Activated CD8-positive, alpha-beta T cell treated with anti-CD3 and anti-CD28 coated beads, Interleukin-2, amount 10 ng/mL, durations not matched to agents 7 days and 5 days (primary cell): ENCODE measurements at regions of chr2 and their contacts with region 1.

Region 1: DNA sequence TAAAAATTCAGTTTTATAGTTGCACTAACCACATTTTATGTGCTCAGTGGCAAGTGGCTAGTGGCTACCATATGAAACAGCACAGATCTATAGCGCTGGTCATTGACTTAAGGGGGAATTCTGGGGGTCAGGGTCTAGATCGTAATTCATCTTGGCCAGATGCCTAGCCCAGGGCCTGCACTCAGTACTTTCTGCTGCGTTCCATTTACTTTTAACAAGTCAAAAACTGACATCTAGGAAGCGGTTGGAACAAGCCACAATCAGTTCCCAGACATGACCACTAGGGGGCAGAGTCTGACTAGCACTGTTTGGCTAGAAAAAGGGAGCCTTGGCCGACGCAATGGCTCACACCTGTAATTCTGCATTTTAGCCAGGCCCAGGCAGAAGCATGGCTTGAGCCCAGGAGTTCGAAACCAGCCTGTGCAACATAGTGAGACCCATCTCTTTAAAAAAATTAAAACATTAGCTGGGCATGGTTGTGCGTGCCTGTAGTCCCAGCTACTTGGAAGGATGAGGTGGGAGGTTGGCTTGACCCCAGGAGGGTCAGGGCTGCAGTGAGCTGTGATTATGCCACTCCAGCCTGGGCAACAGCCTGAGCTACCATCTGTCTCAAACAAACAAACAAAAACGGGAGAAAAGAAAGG is 9.0 kb upstream of the TMBIM1 start:
- DNase-seq: peak; percentile 95
- ATAC-seq: peak; percentile 88
- H3K4me3 Mint-ChIP-seq: no peak overlapping the region
- H3K27ac Mint-ChIP-seq: peak overlapping the region; percentile 46
- H3K4me1 Mint-ChIP-seq: peaks cover 7% of the 10 kb centered on the region
- H3K27me3 Mint-ChIP-seq: no peaks in the 10 kb centered on the region

Region 2: DNA sequence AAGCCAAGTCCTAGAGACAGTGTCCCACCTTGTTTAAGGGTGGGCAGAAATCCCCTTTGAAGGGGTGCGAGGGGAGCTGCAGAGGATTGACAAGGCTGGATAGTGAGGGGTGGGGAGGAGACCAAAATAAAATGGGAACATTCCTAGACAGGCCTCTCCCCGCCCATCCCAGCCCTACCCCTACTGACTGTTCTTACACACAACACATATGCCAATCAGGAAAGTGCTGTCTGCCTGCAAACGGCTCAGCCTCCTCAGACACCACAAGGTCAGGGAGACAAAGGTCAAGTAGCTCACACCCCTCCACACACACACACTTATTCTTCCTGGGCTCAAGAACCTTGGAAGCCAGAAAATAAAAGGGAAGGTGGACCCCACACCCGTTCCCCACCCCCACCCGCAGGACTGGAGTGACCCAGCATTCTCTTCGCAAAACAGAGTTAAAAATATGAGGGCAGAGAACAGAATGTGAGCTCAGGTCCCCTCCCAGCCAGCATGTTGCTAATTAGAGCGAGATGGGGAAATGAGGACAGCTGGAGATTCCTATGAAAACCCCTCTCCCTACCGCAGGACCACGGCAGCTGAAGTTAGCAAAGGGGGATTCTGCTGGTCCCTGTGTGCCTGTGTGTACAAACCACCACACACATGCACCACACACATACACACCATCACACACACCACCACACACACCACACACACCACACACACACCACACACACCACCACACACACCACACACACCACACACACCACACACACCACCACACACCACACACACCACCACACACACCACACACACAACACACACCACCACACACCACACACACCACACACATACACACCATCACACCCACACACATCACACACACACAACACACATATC is 496.3 kb before region 1 on chr2:
- CTCF ChIA-PET with region 1: no interaction called
- POLR2A ChIA-PET with region 1: no interaction called
- DNase-seq: no peak
- ATAC-seq: no peak
- H3K4me3 Mint-ChIP-seq: no peak overlapping the region
- H3K27ac Mint-ChIP-seq: peak overlapping the region; percentile 4
- H3K4me1 Mint-ChIP-seq: no peaks in the 10 kb centered on the region
- H3K27me3 Mint-ChIP-seq: no peaks in the 10 kb centered on the region

Region 3: GRCh38 chr2:218003981-218004419 is 297.3 kb before region 1 on chr2:
- CTCF ChIA-PET with region 1: no interaction called
- POLR2A ChIA-PET with region 1: no interaction called
- DNase-seq: no peak
- ATAC-seq: peak; percentile 34
- H3K4me3 Mint-ChIP-seq: no peak overlapping the region
- H3K27ac Mint-ChIP-seq: no peak overlapping the region
- H3K4me1 Mint-ChIP-seq: no peaks in the 10 kb centered on the region
- H3K27me3 Mint-ChIP-seq: peaks cover 13% of the 10 kb centered on the region

Region 4: DNA sequence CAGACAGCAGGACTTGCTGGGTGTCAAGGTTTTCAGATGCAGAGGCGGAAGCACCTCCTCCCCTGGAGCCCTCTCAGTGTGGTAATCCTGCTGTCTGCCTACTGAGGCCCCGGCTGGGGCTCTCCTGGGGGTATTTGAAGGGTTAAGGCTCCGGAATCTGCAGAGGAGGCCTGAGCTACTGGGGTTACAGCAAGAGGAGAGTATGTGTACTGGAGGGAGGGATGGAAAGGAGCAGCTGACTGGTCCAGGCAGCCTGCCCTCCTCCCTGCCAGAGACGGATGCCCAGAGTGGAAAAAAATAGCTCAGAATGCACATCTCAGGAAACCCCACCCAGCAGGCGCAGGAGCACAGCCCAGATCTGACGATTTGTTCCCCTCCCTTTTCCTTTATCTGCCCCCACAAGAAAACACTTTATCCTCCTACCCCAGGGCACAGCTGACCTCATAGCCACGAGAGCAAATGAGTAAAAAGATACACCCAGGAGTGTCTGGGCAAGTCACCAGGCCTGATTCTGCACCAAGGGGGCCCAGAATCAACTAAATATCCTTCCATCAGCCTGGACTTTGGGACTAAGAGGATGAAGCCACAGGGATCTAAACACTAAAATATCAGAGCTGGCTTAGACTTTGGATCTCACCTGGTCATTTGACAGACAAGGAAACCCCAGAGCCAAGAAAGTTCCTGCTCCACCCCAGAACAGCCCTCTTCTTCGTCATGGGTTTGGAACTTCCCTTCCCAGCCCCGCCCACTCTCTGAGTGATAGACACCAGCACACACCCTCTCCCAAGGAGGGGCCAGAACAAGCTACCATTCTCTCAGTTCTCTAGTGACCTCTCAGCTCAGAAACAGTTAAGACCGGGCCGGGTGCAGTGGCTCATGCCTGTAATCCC is 14.5 kb before region 1 on chr2:
- CTCF ChIA-PET with region 1: interaction called, 30 read pairs
- POLR2A ChIA-PET with region 1: interaction called, 5 read pairs
- DNase-seq: peak; percentile 90
- ATAC-seq: peak; percentile 77
- H3K4me3 Mint-ChIP-seq: peak overlapping the region; percentile 91
- H3K27ac Mint-ChIP-seq: peak overlapping the region; percentile 98
- H3K4me1 Mint-ChIP-seq: peaks cover 78% of the 10 kb centered on the region
- H3K27me3 Mint-ChIP-seq: no peaks in the 10 kb centered on the region

Region 5: DNA sequence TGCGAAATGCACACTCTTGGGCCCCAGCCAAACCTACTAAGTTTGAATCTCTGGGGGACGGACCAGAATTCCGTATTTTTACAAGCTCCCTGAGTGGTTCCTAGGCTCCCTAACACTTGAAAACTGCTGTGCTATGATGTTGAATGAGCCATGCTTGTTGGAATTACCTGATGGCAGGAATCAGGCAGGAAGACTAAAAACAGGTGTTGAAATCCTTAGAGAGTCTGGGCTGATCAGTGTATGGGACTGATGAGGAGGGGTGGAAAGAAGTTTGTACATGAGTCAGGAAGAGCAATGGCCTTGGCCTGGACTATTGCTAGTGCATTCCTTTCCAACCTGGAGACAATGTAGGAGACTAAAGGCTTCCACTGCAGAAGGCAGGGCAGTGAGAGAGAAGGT is 15.9 kb after region 1 on chr2:
- CTCF ChIA-PET with region 1: interaction called, 10 read pairs
- POLR2A ChIA-PET with region 1: interaction called, 3 read pairs
- DNase-seq: no peak
- ATAC-seq: no peak
- H3K4me3 Mint-ChIP-seq: peak overlapping the region; percentile 62
- H3K27ac Mint-ChIP-seq: peak overlapping the region; percentile 91
- H3K4me1 Mint-ChIP-seq: peaks cover 31% of the 10 kb centered on the region
- H3K27me3 Mint-ChIP-seq: no peaks in the 10 kb centered on the region

Region 6: GRCh38 chr2:218345491-218346216 is 44.4 kb after region 1 on chr2:
- CTCF ChIA-PET with region 1: interaction called, 10 read pairs
- POLR2A ChIA-PET with region 1: no interaction called
- DNase-seq: no peak
- ATAC-seq: no peak
- H3K4me3 Mint-ChIP-seq: no peak overlapping the region
- H3K27ac Mint-ChIP-seq: no peak overlapping the region
- H3K4me1 Mint-ChIP-seq: no peaks in the 10 kb centered on the region
- H3K27me3 Mint-ChIP-seq: no peaks in the 10 kb centered on the region

Region 7: DNA sequence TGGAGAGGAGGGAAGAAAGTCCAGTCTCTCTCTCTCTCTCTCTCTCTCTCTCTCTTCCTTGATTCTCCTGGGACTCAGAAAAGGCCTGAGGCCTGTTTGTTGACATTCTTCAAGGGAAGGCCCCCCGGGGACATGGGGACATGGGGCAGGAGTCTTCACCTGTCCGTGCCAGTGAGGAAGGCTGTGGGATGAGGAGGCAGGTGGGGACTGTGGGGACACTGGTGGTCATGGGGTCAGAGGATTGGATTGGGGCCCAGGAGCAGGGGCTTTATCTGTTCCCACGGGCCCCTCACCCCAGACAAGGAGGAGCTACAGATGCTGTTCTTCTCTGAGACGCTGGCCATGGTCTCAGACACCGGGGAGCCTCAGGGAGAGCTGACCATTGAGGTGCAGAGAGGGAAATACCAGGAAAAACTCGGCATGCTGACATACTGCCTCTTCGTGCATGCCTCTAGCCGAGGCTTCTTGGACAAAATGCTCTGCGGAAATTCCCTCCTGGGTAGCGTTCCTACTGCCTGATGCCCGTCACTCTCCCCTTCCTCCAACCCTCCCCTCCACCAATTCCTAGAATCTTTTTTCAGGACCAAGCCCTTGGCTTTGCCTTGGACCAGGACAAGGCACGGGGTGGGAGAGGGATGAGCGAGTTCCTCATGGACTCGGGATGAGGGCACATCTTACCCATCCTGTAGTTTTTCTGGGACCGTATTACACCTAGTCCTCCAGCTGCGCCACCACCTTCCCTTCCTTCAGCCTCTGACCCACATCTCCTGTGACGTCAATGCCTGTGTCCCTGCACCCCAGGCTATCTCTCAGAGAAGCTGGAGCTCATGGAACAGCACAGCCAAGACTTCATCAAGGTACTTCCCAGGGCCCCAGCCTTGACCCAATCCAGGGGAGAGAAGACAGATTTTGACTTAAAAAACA is 56.2 kb after region 1 on chr2:
- CTCF ChIA-PET with region 1: interaction called, 62 read pairs
- POLR2A ChIA-PET with region 1: no interaction called
- DNase-seq: no peak
- ATAC-seq: no peak
- H3K4me3 Mint-ChIP-seq: no peak overlapping the region
- H3K27ac Mint-ChIP-seq: peak overlapping the region; percentile 66
- H3K4me1 Mint-ChIP-seq: peaks cover 2% of the 10 kb centered on the region
- H3K27me3 Mint-ChIP-seq: peaks cover 6% of the 10 kb centered on the region

Region 8: DNA sequence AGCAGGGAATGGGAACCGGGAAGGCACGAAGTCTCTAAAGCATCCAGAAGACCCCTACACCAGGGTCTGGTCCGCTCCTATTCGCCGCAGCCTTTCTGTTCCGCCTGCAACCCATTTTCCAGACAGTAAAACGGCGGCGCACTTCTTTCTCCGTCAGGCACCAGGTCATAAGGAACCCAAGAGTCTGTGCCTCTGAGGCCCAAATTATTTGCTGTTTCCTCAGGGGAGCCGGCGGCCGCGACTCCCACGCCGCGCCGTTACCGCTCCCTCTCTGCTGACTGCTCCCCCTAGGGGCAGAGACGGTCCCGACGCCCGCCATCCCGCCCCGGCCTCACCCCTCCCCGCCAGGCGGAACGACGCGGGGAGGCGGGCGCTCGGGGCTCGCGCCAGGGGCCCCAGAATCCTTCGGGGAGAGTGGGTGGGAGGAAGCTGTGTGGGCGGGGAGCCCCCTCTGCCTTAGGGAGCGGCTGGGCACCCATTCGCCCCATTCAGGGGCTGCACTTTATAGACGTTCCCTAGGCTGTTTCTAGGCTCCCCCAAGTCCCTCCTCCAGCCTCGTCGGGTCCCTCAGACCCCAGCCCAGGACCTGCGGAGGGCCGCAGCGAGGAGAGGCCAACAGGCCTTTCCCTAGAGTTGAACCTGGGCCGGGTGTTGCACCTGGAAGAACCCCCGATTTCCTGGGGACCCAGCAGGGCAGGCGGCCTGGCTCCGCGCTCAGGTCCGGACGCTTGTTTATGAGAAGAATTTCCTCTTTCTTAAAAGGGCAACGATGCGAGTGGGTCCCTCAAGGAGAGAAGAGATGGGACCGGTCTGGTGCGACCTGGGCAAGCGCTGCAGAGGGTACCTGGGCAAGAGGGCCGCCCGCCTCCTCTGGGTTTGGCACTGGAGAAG is 94.7 kb after region 1 on chr2:
- CTCF ChIA-PET with region 1: interaction called, 21 read pairs
- POLR2A ChIA-PET with region 1: interaction called, 7 read pairs
- DNase-seq: peak; percentile 96
- ATAC-seq: peak; percentile 66
- H3K4me3 Mint-ChIP-seq: peak overlapping the region; percentile 85
- H3K27ac Mint-ChIP-seq: peak overlapping the region; percentile 96
- H3K4me1 Mint-ChIP-seq: peaks cover 35% of the 10 kb centered on the region
- H3K27me3 Mint-ChIP-seq: no peaks in the 10 kb centered on the region

Region 9: DNA sequence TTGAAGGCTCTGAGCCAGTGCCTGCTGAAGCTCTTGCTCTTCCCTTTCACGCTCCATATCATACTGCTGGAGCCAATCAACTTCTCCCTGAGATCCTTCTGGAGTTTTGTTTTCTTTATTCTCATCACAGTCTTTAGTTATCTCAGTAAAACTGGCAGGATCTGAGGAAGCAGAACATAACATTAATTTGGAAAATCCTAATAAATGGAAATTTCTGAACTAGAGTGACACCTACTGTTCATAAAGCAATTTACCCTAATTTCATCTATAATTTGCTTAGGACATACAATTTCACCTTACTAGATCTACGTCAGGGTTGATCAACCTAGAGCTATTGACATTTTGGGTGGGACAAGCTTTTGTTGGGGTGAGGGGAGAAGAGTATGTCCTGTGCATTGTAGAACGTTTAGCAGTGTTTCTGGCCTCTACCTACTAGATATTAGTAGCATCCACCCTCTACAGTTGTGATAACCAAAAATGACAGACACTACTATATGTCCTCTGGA is 164.8 kb after region 1 on chr2:
- CTCF ChIA-PET with region 1: interaction called, 10 read pairs
- POLR2A ChIA-PET with region 1: no interaction called
- DNase-seq: no peak
- ATAC-seq: peak; percentile 39
- H3K4me3 Mint-ChIP-seq: no peak overlapping the region
- H3K27ac Mint-ChIP-seq: no peak overlapping the region
- H3K4me1 Mint-ChIP-seq: peaks cover 9% of the 10 kb centered on the region
- H3K27me3 Mint-ChIP-seq: no peaks in the 10 kb centered on the region

Region 10: GRCh38 chr2:218501665-218502064 is 200.4 kb after region 1 on chr2:
- CTCF ChIA-PET with region 1: no interaction called
- POLR2A ChIA-PET with region 1: no interaction called
- DNase-seq: no peak
- ATAC-seq: no peak
- H3K4me3 Mint-ChIP-seq: no peak overlapping the region
- H3K27ac Mint-ChIP-seq: no peak overlapping the region
- H3K4me1 Mint-ChIP-seq: no peaks in the 10 kb centered on the region
- H3K27me3 Mint-ChIP-seq: no peaks in the 10 kb centered on the region